ENCODE measurements at regions of chr4 and their contacts with region 1.

Region 1: DNA sequence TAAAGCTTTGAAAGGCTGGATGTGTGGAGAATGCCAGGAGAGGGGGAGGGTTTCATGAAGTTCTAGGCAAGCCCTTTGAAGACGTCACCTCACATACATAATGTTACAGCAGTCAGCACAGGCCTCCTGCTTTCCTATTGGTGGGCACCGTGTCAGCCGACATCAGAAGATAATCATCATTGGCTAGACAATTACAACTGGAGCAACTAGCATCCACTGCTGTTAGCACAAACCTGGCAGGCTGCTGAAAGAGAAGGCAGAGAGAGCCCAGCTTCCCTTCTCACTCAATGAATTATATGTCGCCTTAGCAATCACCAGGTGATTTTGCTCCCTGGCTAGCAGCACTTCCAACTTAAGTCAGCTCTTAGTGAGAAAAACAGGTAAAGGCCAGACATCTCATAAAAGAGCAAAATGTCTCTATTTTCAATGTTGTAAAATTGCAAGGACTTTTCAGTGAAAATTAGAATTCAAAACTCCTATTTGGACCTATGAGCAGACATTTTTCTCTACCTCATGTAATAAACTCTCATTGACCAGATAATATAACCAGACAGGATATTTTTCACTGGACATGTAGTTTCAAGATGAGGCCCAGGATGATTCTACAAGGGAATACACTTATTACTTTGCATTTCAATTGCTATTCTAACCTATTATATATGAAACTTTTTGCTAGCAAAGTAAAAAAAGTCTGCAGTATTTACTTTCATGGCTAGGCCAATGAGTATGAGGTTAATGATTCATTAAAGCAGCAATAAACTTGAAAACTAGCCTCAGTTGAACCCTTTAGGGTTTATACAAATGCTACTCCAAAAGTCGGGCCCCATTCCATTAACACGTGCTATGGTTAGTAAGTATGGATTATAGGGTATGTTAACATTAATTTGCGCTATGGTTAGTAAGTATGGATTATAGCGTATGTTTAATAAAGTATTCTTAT is 4.3 kb downstream of the ELOVL6 start:
- DNase-seq: peak; percentile 84
- H3K4me3 Mint-ChIP-seq: peak overlapping the region; percentile 34
- H3K27ac Mint-ChIP-seq: peak overlapping the region; percentile 72
- H3K4me1 Mint-ChIP-seq: peaks cover 36% of the 10 kb centered on the region
- H3K27me3 Mint-ChIP-seq: peaks cover 2% of the 10 kb centered on the region

Region 2: DNA sequence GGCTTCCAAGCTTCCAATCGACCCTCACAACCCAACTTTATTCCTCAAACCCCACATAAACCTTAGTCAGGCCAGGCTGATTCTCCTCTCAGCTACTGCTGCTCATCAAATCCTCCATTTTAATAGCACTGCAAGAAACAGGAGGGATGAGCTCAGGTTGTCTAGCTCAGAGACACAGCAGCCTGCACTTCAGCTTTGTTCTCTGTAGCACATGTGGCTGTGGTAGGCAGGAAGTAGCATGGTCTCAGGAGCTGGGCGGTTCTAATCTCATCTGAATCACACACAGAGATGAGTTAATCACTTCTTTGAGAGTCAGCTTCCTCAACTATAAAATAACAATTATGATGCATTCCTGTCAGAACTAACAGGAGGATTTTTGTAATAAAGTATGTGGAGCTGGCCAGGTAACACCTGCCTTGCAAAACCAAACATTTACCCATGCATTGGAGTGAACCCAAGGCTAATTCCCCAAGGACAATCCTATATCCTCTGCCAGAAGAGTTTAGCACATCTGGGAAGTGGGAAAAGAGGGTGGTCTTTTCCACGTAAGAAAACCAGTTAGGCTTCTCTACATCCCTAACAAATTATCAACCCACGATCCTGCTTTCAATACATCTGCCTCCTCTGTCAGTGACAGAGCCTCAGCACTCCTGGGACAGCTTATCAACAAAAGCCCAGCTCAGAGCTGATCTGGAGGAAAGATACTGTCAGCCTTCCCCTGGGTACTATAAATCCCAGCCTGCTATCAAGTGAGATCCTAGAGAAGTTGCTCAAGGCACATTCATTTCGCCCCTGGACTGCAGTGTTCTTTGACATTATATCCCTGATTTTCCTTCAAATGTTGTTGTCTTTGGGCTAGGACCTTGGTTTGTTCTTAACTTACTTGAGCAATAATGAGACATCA is 28.5 kb before region 1 on chr4:
- CTCF ChIA-PET with region 1: interaction called, 7 read pairs
- POLR2A ChIA-PET with region 1: interaction called, 142 read pairs
- DNase-seq: peak; percentile 79
- H3K4me3 Mint-ChIP-seq: peak overlapping the region; percentile 50
- H3K27ac Mint-ChIP-seq: peak overlapping the region; percentile 95
- H3K4me1 Mint-ChIP-seq: peaks cover 37% of the 10 kb centered on the region
- H3K27me3 Mint-ChIP-seq: no peaks in the 10 kb centered on the region

Region 3: DNA sequence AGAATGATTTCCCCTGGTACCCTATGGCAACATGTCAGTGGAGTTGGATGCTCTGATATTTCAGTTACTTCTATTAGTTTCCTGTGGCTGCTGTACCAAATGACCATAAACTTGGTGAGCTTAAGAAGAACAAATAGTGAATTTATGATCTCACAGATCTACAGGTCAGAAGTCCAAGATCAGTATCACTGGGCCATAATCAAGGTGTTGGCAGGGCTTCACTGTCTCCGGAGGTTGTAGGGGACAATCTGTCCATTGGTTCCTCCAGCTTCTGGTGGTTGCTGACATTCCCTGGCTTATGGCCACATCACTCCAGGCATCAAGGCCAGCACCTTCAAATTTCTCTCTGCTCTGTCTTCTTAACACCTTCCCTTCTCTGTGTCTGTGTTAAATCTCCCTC is 42.2 kb after region 1 on chr4:
- CTCF ChIA-PET with region 1: no interaction called
- POLR2A ChIA-PET with region 1: no interaction called
- DNase-seq: no peak
- H3K4me3 Mint-ChIP-seq: no peak overlapping the region
- H3K27ac Mint-ChIP-seq: no peak overlapping the region
- H3K4me1 Mint-ChIP-seq: no peaks in the 10 kb centered on the region
- H3K27me3 Mint-ChIP-seq: peaks cover 17% of the 10 kb centered on the region